ENCODE measurements at regions of chr22 and their contacts with region 1.

Region 1: DNA sequence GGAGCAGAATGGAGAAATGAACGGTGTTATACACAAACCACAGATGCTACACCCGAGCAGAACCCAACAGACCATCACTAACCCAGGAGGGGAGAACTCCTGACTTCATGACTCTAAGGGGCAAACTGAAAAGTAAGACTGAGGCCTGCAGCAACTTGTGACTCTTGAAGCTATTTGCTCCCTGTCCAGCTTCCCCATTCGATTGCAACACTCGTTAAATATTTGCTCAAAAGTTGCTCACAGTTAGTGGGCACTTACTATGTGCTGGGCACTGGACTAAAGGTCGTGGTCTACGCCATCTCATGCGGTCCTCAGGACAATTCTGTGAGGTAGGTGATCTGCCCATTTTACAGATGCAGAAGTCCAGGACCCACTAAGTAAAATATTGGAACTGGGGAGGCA is 9.5 kb upstream of the ADA2 start:
- DNase-seq: no peak
- ATAC-seq: no peak
- H3K4me3 ChIP-seq: no peak overlapping the region
- H3K27ac ChIP-seq: no peak overlapping the region
- H3K4me1 ChIP-seq: no peaks in the 10 kb centered on the region
- H3K27me3 ChIP-seq: no peaks in the 10 kb centered on the region
- CTCF ChIP-seq: no peak

Region 2: DNA sequence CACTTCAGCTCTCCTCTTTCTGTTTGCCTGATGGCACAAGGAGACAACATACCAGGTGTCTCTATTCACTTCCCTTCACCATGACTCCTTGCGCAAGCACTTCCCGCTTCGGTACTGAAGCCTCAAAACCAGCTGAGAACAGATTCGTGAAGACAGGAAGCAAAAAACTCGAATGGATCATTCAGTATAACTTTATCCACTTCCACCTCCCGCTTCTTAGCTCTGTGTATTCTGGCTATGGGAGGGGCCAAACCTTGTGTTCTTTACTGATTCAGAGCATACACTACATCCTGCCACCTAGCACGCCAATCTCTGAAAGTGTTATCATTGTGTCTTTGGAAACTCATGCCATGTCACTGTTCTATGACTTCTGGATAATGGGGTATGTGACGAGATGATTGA is 52.7 kb after region 1 on chr22:
- CTCF ChIA-PET with region 1: no interaction called
- POLR2A ChIA-PET with region 1: no interaction called
- in situ Hi-C with region 1: no loop called
- intact Hi-C with region 1: loop called (anchors 10 kb)
- DNase-seq: no peak
- ATAC-seq: no peak
- H3K4me3 ChIP-seq: no peak overlapping the region
- H3K27ac ChIP-seq: no peak overlapping the region
- H3K4me1 ChIP-seq: no peaks in the 10 kb centered on the region
- H3K27me3 ChIP-seq: no peaks in the 10 kb centered on the region
- CTCF ChIP-seq: no peak

Region 3: GRCh38 chr22:17334059-17334458 is 105.3 kb after region 1 on chr22:
- CTCF ChIA-PET with region 1: no interaction called
- POLR2A ChIA-PET with region 1: no interaction called
- in situ Hi-C with region 1: no loop called
- intact Hi-C with region 1: no loop called
- DNase-seq: no peak
- ATAC-seq: no peak
- H3K4me3 ChIP-seq: no peak overlapping the region
- H3K27ac ChIP-seq: no peak overlapping the region
- H3K4me1 ChIP-seq: no peaks in the 10 kb centered on the region
- H3K27me3 ChIP-seq: no peaks in the 10 kb centered on the region
- CTCF ChIP-seq: no peak

Measured in Panc1 (cell line).